ENCODE measurements at regions of chr6 and their contacts with region 1.

Region 1: DNA sequence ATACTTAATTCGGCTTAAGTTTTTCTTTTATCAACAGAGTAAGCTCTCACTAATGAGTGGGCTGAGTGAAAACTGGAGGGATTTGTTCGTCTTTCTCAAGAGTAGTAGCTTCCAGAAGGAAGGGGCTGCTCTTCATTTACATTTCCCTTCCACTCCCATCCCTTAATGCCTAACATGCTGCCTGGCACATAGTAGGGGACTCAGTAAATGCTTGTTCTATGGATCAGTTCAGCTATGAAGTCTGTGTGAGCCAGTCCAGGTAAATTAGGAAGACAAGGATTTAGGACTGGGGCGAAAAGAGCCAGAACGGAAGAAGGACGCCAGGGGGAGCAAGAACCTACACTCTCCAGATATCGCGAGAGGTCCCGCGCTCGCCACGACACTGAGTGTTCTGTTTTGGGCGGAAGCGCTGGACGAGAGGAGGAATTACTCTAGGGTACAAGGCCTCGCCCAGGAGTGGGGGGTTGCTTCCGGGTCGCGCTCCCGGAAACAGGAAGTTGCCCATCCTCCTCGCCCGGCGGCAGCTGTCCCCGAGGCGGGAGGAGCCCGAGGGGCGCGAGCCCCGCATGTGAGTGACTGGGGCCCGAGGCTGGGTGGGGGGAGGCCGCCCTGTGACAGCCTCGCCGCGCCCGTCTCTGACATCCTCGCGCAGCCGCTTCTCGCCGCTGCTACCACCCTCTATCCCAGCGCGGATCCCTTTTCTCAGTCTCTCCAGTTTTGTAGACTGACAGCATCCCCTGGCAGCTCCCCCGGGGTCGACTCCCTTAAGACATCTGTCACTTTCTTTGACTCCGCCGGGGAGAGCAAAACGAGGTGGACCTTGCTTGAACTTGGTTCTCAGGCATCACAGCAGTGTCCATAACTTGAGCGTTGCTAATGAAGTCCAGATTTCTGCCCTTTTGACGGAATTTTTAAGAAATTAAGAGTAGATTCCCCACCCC is at the start of gene C6orf89:
- DNase-seq: peak; percentile 99
- ATAC-seq: peak; percentile 100
- H3K4me3 Mint-ChIP-seq: peak within 1 kb of the TSS; percentile 91
- H3K27ac Mint-ChIP-seq: peak within 1 kb of the TSS; percentile 87
- H3K4me1 Mint-ChIP-seq: peaks cover 35% of the 10 kb centered on the region
- H3K27me3 Mint-ChIP-seq: no peaks in the 10 kb centered on the region
- total RNA-seq, gene C6orf89: 40.0 to 41.1 TPM

Region 2: DNA sequence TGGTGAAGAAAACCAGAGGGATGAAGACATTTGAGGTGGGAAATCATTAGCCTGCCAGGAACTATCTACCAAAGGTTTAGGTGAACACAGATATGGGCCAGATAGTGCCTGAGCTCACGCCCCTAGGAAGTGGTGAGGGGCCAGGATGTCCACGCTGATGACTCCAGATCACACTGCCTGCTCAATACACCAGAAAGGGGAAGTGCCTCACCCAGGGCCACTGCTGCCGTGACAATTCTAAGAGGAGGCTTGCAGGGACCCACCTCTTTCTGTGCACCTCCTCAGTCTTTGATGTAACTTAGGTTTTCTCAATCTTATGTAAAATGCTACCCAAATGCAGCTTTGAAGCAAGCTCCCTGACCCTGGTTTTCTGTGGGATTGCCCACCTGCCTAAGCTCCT is 193.5 kb before region 1 on chr6:
- CTCF ChIA-PET with region 1: no interaction called
- POLR2A ChIA-PET with region 1: no interaction called
- DNase-seq: peak; percentile 78
- ATAC-seq: peak; percentile 90
- H3K4me3 Mint-ChIP-seq: peak overlapping the region; percentile 9
- H3K27ac Mint-ChIP-seq: peak overlapping the region; percentile 86
- H3K4me1 Mint-ChIP-seq: peaks cover 46% of the 10 kb centered on the region
- H3K27me3 Mint-ChIP-seq: no peaks in the 10 kb centered on the region

Region 3: GRCh38 chr6:36844232-36845170 is 41.2 kb before region 1 on chr6:
- CTCF ChIA-PET with region 1: no interaction called
- POLR2A ChIA-PET with region 1: no interaction called
- DNase-seq: no peak
- ATAC-seq: no peak
- H3K4me3 Mint-ChIP-seq: no peak overlapping the region
- H3K27ac Mint-ChIP-seq: no peak overlapping the region
- H3K4me1 Mint-ChIP-seq: peaks cover 7% of the 10 kb centered on the region
- H3K27me3 Mint-ChIP-seq: peaks cover 11% of the 10 kb centered on the region

Region 4: DNA sequence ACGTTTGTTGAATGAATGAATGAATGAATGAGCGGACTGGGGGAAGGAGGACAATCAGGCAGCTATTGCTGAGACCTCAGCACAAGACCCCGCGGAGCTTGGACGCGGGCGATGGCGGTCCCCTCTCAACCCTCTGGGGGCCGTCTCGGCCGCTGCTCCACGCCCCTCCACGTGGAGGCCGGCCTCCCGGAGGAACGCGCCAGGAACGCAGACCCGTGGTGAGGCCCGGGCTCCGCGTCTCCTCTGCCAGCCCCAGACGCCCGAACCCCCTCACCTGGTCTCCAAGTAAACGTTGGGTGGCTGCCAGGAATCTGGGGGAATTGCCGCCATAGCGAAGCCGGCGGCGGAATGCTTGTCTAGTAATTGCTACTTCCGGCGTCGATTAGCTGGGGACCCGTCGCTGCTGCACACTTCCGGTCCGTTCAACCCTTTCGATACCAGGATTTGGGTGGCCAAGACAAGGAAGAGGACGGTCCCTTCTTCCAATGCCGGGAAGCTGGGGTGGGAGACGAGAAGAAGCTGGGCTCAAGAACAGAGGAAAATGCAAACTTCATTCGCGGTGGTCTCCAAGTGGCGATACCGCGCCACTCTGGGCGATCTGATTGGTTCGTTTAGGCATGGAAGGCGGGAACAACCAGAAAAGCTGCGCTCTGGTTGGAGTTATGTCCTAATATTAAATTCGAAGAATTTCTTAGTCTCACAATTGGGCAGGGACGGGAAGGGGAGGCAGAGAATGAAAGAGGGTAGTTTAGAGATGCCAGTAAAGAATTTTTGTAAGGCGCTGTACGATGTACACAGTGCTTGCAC is 11.1 kb before region 1 on chr6 and contains the start of gene PPIL1:
- CTCF ChIA-PET with region 1: interaction called, 130 read pairs
- POLR2A ChIA-PET with region 1: interaction called, 35 read pairs
- DNase-seq: peak; percentile 89
- ATAC-seq: peak; percentile 94
- H3K4me3 Mint-ChIP-seq: peak within 1 kb of the TSS; percentile 83
- H3K27ac Mint-ChIP-seq: peak within 1 kb of the TSS; percentile 98
- H3K4me1 Mint-ChIP-seq: peaks cover 47% of the 10 kb centered on the region
- H3K27me3 Mint-ChIP-seq: peaks cover 8% of the 10 kb centered on the region
- total RNA-seq, gene PPIL1: 32.6 to 33.5 TPM

Region 5: DNA sequence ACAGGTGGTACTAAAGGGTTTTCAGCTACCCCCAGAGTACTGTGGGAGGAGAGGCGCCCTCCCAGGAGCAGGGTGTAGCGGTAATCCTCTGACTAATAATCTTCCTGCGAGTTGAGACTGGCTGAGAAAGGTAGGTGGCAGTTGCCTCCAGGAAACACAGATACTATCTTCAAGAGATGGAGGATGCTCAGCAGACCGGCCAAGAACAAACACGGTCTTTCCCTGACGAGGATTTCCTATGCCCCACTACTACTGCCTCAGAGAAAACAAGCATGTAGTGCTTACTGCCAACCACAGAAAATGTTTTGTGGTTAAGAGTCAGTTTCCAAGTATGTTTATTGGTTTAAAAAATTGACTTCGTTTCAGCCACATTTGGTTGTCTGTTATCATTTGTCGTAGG is 26.9 kb after region 1 on chr6:
- CTCF ChIA-PET with region 1: interaction called, 18 read pairs
- POLR2A ChIA-PET with region 1: interaction called, 8 read pairs
- DNase-seq: peak; percentile 83
- ATAC-seq: peak; percentile 94
- H3K4me3 Mint-ChIP-seq: peak overlapping the region; percentile 72
- H3K27ac Mint-ChIP-seq: peak overlapping the region; percentile 87
- H3K4me1 Mint-ChIP-seq: peaks cover 57% of the 10 kb centered on the region
- H3K27me3 Mint-ChIP-seq: no peaks in the 10 kb centered on the region

Region 6: DNA sequence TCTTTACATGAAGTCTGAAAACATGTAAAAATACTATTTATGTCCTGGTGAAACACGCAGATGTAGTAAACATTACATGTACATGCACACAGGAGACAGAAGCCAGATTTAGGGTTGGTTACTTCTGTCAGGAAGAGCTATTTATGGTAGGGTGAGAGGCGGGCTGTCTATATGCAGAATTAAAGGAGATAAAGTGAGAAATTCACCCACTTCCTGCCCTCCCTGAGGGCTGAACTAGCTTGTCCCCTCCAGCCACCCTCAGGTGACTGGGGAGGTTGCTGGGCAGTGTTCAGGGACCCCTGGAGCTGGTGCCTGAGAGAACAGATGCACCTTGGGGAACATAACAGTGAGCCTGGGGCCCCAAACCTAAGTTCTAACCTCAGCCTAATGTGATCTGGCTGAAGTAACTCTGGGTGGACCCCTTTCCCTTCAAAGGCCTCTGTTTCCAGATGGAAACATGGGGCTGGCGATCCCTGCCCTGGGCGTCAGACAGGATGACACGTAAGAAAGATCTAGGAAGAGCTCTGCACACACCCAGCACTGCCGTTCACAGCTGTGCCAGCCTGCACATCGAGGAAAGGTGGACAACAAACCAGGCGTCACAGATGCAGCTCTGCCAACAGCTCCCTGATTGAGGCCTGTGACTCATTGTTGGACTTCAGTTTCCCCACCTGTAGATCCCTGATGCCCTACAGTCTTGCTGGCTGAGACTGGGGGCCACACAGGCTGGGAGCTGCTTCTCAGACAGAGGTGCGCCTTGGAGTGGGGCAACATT is 70.1 kb after region 1 on chr6:
- CTCF ChIA-PET with region 1: interaction called, 10 read pairs
- POLR2A ChIA-PET with region 1: interaction called, 3 read pairs
- DNase-seq: no peak
- ATAC-seq: peak; percentile 38
- H3K4me3 Mint-ChIP-seq: no peak overlapping the region
- H3K27ac Mint-ChIP-seq: no peak overlapping the region
- H3K4me1 Mint-ChIP-seq: peaks cover 39% of the 10 kb centered on the region
- H3K27me3 Mint-ChIP-seq: peaks cover 17% of the 10 kb centered on the region

Region 7: GRCh38 chr6:37005061-37005810 is 119.5 kb after region 1 on chr6 and contains the start of gene FGD2:
- CTCF ChIA-PET with region 1: interaction called, 13 read pairs
- POLR2A ChIA-PET with region 1: no interaction called
- DNase-seq: no peak
- ATAC-seq: peak; percentile 31
- H3K4me3 Mint-ChIP-seq: peak within 1 kb of the TSS; percentile 56
- H3K27ac Mint-ChIP-seq: peak within 1 kb of the TSS; percentile 71
- H3K4me1 Mint-ChIP-seq: peaks cover 32% of the 10 kb centered on the region
- H3K27me3 Mint-ChIP-seq: peaks cover 3% of the 10 kb centered on the region
- total RNA-seq, gene FGD2: 10.1 to 12.1 TPM